ENCODE measurements at regions of chr13 and their contacts with region 1.

Region 1: GRCh38 chr13:91313103-91313502 is 34.4 kb upstream of the MIR17HG start:
- DNase-seq: no peak
- ATAC-seq: peak; percentile 58
- H3K4me3 Mint-ChIP-seq: no peak overlapping the region
- H3K27ac Mint-ChIP-seq: no peak overlapping the region
- H3K4me1 Mint-ChIP-seq: peaks cover 5% of the 10 kb centered on the region
- H3K27me3 Mint-ChIP-seq: peaks cover 2% of the 10 kb centered on the region
- CTCF ChIP-seq: no peak

Region 2: GRCh38 chr13:91398413-91399272 is 85.5 kb after region 1 on chr13 and contains the start of gene GPC5:
- CTCF ChIA-PET with region 1: no interaction called
- POLR2A ChIA-PET with region 1: no interaction called
- intact Hi-C with region 1: loop called (anchors 2 kb)
- DNase-seq: peak; percentile 74
- ATAC-seq: peak; percentile 99
- H3K4me3 Mint-ChIP-seq: peak within 1 kb of the TSS; percentile 78
- H3K27ac Mint-ChIP-seq: no peak within 1 kb of the TSS
- H3K4me1 Mint-ChIP-seq: peaks cover 23% of the 10 kb centered on the region
- H3K27me3 Mint-ChIP-seq: peaks cover 22% of the 10 kb centered on the region
- CTCF ChIP-seq: no peak
- total RNA-seq, gene GPC5: 0.24 and 0.46 TPM in 2 replicates

Region 3: GRCh38 chr13:91406619-91407018 is 93.5 kb after region 1 on chr13:
- CTCF ChIA-PET with region 1: interaction called, 6 read pairs
- POLR2A ChIA-PET with region 1: no interaction called
- intact Hi-C with region 1: loop called (anchors 1 kb)
- DNase-seq: no peak
- ATAC-seq: peak; percentile 50
- H3K4me3 Mint-ChIP-seq: no peak overlapping the region
- H3K27ac Mint-ChIP-seq: no peak overlapping the region
- H3K4me1 Mint-ChIP-seq: peaks cover 3% of the 10 kb centered on the region
- H3K27me3 Mint-ChIP-seq: peaks cover 14% of the 10 kb centered on the region
- CTCF ChIP-seq: no peak

Region 4: DNA sequence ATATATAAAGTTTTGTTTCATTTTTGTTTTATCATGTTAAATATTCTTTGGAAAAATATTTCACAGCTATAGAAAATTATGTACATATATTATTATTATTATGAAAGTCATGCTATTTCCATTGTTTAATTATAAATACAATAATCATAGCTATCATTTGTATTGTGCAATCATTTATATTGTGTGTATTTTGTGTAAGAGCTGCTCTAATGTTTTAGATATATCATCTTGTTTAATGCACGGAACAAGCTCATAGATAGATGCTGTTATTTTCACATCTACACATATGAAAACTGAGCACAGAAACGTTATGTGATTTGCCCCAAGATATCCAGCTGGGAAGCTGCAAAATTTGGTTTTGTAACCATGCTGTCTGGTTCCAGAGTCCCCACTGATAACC is 197.0 kb after region 1 on chr13:
- CTCF ChIA-PET with region 1: no interaction called
- POLR2A ChIA-PET with region 1: no interaction called
- intact Hi-C with region 1: no loop called
- DNase-seq: no peak
- ATAC-seq: no peak
- H3K4me3 Mint-ChIP-seq: no peak overlapping the region
- H3K27ac Mint-ChIP-seq: no peak overlapping the region
- H3K4me1 Mint-ChIP-seq: no peaks in the 10 kb centered on the region
- H3K27me3 Mint-ChIP-seq: no peaks in the 10 kb centered on the region
- CTCF ChIP-seq: no peak

Region 5: DNA sequence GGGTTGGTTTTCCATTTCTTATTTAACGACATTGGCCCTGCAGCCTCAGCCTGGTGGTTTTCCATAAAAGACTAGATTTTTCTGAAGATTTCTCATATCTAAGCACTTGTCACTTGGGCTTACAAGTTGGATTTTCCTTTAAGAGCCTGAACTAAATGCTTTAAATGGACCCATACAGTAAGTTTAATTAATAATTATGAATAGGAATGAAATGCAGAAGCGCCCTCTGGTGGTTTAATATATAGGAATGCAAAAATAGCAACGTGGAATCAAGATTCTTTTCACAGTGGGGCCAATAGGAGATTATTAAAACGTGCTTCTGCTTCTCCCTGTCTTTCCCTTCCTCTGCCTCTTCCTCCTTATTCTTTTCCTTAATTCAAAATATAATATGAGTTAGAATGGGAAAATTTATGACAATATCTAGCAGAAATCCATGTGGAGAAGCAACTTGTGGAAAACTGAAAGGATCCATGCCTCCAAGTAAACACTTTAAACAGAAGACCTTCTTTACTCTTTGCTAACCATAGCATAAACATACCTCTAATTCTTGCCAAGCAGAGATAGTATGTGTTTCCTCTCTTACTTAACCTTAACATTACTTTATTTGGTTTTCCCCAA is 409.3 kb after region 1 on chr13:
- CTCF ChIA-PET with region 1: interaction called, 3 read pairs
- POLR2A ChIA-PET with region 1: no interaction called
- intact Hi-C with region 1: loop called (anchors 1 kb)
- DNase-seq: no peak
- ATAC-seq: no peak
- H3K4me3 Mint-ChIP-seq: no peak overlapping the region
- H3K27ac Mint-ChIP-seq: no peak overlapping the region
- H3K4me1 Mint-ChIP-seq: no peaks in the 10 kb centered on the region
- H3K27me3 Mint-ChIP-seq: no peaks in the 10 kb centered on the region
- CTCF ChIP-seq: peak; percentile 37

Region 6: DNA sequence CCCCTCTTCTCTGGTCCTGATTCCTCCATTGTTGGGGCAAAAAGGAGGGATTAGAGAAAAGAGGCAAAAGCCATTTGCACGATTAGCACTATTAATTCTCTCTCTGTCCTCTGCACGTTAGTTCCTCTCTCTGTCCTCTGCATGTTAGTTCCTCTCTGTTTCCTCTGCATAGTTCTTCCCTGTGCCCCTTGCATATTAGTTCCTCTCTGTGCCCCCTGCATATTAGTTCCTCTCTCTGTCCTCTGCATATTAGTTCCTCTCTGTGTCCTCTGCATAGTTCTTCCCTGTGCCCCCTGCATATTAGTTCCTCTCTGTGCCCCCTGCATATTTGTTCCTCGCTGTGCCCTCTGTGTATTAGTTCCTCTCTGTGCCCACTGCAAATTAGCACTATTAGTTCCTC is 1066.3 kb after region 1 on chr13:
- CTCF ChIA-PET with region 1: no interaction called
- POLR2A ChIA-PET with region 1: no interaction called
- intact Hi-C with region 1: no loop called
- DNase-seq: no peak
- ATAC-seq: no peak
- H3K4me3 Mint-ChIP-seq: no peak overlapping the region
- H3K27ac Mint-ChIP-seq: no peak overlapping the region
- H3K4me1 Mint-ChIP-seq: no peaks in the 10 kb centered on the region
- H3K27me3 Mint-ChIP-seq: no peaks in the 10 kb centered on the region
- CTCF ChIP-seq: no peak

Measured in activated B cell treated with CpG ODN at 0.5 μM for 24 hours (primary cell).